ENCODE measurements at regions of chr4 and their contacts with region 1.

Region 1: DNA sequence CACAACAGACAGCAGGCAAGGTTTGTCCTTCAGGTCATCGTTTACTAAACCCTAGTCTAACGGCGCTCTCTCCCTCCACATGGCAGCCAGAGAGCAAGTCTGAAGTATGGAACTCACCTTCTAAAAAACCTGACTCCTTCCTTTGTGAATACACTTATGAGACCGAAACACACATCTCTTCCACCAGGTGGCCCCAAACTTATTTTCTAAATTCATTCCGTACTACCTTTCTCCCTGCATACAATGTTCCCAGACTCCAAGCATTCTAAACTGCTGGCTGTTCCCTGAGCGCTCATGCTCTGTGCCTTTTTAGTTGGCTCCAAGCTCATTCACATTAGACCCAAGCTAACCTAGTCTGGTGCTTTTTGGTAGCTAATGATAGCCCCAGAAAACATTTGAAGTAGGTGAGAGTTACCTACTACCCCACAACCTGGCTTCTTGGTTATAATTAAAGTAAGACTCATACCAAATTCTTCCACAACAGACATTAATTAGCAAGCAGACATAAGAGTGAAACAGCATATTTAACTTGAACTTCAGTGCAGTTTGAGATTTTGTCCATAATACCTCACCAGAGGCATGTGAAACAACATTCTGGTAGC is 67.6 kb upstream of the DCLK2 start:
- DNase-seq: peak in 1 of 3 donors; percentile 77
- ATAC-seq: peak; percentile 87
- H3K4me3 ChIP-seq: no peak overlapping the region
- H3K4me1 ChIP-seq: peaks cover 5% of the 10 kb centered on the region
- CTCF ChIP-seq: no peak

Region 2: GRCh38 chr4:150209140-150209829 is 198.7 kb after region 1 on chr4:
- intact Hi-C with region 1: loop called (anchors 5 to 10 kb)
- DNase-seq: peak in 2 of 3 donors; percentile 74 to 87
- ATAC-seq: peak; percentile 75
- H3K4me3 ChIP-seq: no peak overlapping the region
- H3K4me1 ChIP-seq: no peaks in the 10 kb centered on the region
- CTCF ChIP-seq: peak; percentile 29